ENCODE measurements at regions of chr2 and their contacts with region 1.

Region 1: DNA sequence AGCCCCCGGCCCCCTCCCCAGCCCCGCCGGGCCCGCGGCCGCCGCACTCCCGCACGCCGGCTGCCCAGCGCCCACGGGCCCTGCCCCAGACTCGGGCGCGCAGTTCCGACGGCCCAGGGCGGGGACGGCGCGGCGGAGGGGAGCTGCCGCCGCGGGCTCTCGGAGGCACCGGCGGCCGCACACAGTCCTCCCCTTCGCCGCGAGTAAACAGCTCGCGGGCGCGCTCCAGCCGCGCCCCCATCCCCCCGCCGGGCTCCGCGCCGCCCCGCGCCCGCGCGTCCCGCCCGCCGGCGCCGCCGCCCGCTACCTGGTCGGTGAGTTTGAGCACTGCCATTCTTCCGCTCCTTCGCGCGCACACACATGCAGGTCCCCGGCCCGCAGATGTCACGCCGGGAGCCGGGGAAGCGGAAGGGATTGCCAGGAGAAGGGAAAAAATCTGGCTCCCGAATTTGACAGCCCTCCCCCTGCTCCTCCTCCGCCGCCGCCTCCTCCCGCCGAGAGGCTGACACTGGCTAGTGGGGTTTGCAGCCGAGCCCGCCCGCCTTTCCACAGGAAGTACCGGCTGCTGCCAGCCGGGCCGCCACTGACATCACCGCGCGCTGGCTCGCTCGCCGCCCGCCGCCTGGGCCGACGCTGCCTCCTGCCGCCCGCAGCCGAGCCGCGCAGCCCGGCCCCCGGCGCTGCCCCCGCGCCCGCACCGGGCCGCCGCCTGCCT is at the start of gene ANKRD44:
- DNase-seq: peak; percentile 86 to 94 (median 91)
- ATAC-seq: peak; percentile 88
- H3K4me3 ChIP-seq: peak within 1 kb of the TSS; percentile 90
- H3K4me3 Mint-ChIP-seq: peak within 1 kb of the TSS; percentile 89 to 98 (median 94)
- H3K27ac ChIP-seq: peak within 1 kb of the TSS; percentile 85
- H3K27ac Mint-ChIP-seq: peak within 1 kb of the TSS; percentile 93 to 99 (median 95)
- H3K4me1 ChIP-seq: peaks cover 34 to 43% of the 10 kb centered on the region in 2 donors
- H3K4me1 Mint-ChIP-seq: peaks cover 35 to 74% (median 68%) of the 10 kb centered on the region in 7 donors
- H3K27me3 ChIP-seq: no peaks in the 10 kb centered on the region
- H3K27me3 Mint-ChIP-seq: no peaks in the 10 kb centered on the region
- total RNA-seq, gene ANKRD44: 234 to 296 (median 291) TPM

Region 2: DNA sequence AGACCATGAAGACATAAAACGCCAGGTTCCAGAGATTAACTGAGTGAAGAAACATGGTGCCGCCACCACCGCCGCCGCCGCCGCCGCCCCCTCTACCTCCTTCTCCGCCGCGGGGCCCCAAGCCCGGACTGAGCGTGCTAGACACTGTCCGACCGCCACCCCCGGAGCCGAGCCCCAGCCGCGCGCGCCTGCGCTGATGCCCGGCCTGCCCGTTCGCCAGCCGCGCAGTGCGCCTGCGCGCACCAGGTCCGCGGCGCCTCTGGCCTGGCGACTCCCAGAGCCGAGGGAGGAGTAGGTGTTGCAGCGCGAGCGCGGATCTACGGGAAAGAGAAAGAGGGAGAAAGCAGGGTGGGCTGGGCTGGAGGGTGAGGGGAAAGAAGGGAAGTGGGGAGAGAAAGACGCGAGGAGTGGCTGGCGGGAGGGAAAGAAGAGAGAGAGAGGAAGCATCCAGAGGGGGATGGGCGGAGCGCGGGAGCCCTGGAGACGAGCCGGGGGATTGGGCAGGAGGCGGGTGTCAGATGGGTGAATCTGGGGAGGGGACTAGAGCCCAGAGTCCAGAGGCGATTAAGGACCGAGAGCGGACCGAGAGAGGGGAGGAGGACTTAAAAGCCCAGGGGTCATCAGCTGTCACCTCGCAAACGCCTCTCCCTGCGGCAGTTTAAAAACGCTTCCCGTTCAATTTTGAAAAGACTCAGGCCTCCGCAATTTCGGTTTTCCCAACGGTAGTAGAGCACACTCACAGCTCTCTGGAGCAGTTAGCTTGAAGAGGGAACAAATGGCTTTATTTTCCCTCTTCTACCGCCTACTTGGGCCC is 383.7 kb before region 1 on chr2 and contains the start of gene PGAP1:
- CTCF ChIA-PET with region 1: no interaction called
- POLR2A ChIA-PET with region 1: no interaction called
- intact Hi-C with region 1: loop called in 1 of 2 experiments (anchors 10 kb)
- DNase-seq: peak; percentile 66 to 95 (median 72)
- ATAC-seq: peak; percentile 89
- H3K4me3 ChIP-seq: peak within 1 kb of the TSS; percentile 91
- H3K4me3 Mint-ChIP-seq: peak within 1 kb of the TSS; percentile 85 to 100 (median 96)
- H3K27ac ChIP-seq: peak within 1 kb of the TSS; percentile 79
- H3K27ac Mint-ChIP-seq: peak within 1 kb of the TSS; percentile 90 to 97 (median 94)
- H3K4me1 ChIP-seq: peaks cover 4 to 6% of the 10 kb centered on the region in 2 donors
- H3K4me1 Mint-ChIP-seq: peaks cover 22 to 43% (median 39%) of the 10 kb centered on the region in 7 donors
- H3K27me3 ChIP-seq: no peaks in the 10 kb centered on the region
- H3K27me3 Mint-ChIP-seq: peaks cover 0 to 2% (median 0%) of the 10 kb centered on the region in 5 donors
- total RNA-seq, gene PGAP1: 6.0 to 48.4 (median 6.9) TPM

Region 3: DNA sequence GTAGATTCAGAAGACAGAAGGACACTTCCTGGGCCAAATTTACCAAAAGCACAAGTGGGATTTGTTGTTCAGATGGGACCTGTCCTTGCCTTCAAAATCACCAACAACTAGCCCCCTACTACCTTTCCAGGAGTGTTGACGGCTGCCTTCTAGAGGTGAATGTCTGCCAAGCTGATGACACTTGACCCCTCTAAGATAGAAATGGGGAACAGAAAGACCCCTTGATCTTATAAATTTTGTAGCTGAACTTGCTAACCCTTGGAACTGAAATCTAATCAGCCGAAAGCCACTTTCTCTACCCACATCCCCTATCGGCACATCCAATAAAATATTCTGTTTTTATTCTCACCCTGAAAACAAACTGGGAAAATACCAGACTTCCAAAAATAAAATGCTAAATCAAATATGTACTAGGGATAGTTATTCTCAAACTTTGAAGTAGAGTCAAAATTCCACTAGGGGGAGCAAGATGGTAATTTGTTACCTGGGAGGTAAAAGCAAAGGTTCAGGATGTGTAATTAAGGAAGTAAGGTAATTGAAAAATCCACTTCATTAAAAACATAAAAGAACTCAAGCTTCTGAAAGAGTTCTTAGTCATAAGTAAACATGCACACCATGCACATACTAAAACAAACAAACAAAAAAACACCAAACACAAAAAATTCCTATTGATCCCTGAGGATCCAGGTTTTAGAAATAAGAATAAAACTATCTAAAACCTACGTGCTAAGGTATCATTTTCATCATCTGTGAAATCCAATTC is 119.1 kb before region 1 on chr2:
- CTCF ChIA-PET with region 1: interaction called, 80 read pairs
- POLR2A ChIA-PET with region 1: interaction called, 250 read pairs
- intact Hi-C with region 1: loop called (anchors 1 kb)
- DNase-seq: peak in 7 of 9 donors; percentile 59 to 75 (median 72)
- ATAC-seq: peak; percentile 78
- H3K4me3 ChIP-seq: no peak overlapping the region
- H3K4me3 Mint-ChIP-seq: peak overlapping the region in 9 of 10 donors; percentile 12 to 78 (median 51)
- H3K27ac ChIP-seq: peak overlapping the region; percentile 65
- H3K27ac Mint-ChIP-seq: peak overlapping the region; percentile 74 to 91 (median 79)
- H3K4me1 ChIP-seq: peaks cover 56 to 72% of the 10 kb centered on the region in 2 donors
- H3K4me1 Mint-ChIP-seq: peaks cover 49 to 95% (median 90%) of the 10 kb centered on the region in 7 donors
- H3K27me3 ChIP-seq: no peaks in the 10 kb centered on the region
- H3K27me3 Mint-ChIP-seq: no peaks in the 10 kb centered on the region

Region 4: DNA sequence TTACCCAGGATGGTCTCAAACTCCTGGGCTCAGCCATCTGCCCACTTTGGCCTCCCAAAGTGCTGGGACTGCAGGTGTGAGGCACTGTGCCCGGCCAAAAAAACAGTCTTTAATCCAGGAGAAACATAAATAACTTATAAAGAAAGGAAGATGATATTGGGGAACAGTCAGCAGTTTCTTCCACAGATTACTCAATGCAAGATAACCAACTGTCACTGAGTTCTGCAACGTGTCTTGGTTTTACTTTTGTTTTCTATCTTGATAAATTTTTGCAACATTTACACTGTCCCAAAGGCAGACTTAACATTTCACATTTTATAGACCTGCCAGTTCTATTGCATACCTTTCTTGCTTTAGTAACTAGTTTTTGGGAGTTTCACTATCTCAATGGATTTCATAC is 71.0 kb before region 1 on chr2:
- CTCF ChIA-PET with region 1: interaction called, 6 read pairs
- POLR2A ChIA-PET with region 1: interaction called, 19 read pairs
- intact Hi-C with region 1: loop called (anchors 1 kb)
- DNase-seq: peak in 1 of 9 donors; percentile 30
- ATAC-seq: peak; percentile 48
- H3K4me3 ChIP-seq: peak overlapping the region; percentile 52
- H3K4me3 Mint-ChIP-seq: peak overlapping the region; percentile 72 to 91 (median 83)
- H3K27ac ChIP-seq: peak overlapping the region; percentile 70
- H3K27ac Mint-ChIP-seq: peak overlapping the region; percentile 87 to 98 (median 94)
- H3K4me1 ChIP-seq: peaks cover 86 to 87% of the 10 kb centered on the region in 2 donors
- H3K4me1 Mint-ChIP-seq: peaks cover 62 to 95% (median 89%) of the 10 kb centered on the region in 7 donors
- H3K27me3 ChIP-seq: no peaks in the 10 kb centered on the region
- H3K27me3 Mint-ChIP-seq: no peaks in the 10 kb centered on the region

Region 5: DNA sequence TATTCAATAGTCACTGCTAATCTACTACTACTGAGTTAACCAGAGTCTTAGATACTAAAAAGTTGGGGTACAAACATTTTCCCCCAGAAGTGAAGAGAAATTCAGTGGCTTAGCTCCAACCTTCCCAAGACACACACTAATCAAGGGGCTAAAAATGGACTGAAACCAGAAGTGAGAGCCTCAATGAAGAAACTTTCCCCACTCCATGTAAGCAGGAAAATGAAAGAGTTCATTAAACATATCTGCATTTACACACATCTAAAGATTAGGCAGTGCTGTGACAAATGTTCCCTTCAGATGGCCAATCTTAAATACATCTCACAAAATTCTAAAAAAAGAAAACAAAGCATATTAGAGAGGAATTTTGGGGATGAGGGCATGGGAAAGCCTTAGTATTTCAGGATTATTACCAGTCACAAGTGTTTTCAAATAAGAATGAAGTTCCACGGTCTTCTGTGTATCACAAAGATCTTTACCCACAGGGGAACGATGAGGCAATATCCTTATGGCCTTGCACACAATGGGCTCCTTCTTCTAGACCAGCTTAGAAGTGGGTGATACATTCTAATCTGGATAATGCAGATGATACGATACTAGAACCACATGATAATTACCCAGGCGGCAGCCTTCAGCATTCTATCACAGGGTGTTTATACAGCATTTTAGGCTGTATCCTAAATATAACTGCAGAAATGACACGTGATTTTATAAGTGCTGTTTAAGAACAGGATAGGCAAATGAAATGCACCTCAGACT is 17.0 kb before region 1 on chr2:
- CTCF ChIA-PET with region 1: interaction called, 4 read pairs
- POLR2A ChIA-PET with region 1: interaction called, 158 read pairs
- intact Hi-C with region 1: loop called (anchors 1 kb)
- DNase-seq: peak in 1 of 9 donors; percentile 49
- ATAC-seq: peak; percentile 80
- H3K4me3 ChIP-seq: peak overlapping the region; percentile 23
- H3K4me3 Mint-ChIP-seq: peak overlapping the region; percentile 74 to 97 (median 84)
- H3K27ac ChIP-seq: peak overlapping the region; percentile 69
- H3K27ac Mint-ChIP-seq: peak overlapping the region; percentile 87 to 99 (median 95)
- H3K4me1 ChIP-seq: peaks cover 87 to 93% of the 10 kb centered on the region in 2 donors
- H3K4me1 Mint-ChIP-seq: peaks cover 71 to 96% (median 91%) of the 10 kb centered on the region in 7 donors
- H3K27me3 ChIP-seq: no peaks in the 10 kb centered on the region
- H3K27me3 Mint-ChIP-seq: no peaks in the 10 kb centered on the region

Region 6: GRCh38 chr2:197453161-197453914 is 142.9 kb after region 1 on chr2 and contains the start of gene COQ10B:
- CTCF ChIA-PET with region 1: no interaction called
- POLR2A ChIA-PET with region 1: no interaction called
- intact Hi-C with region 1: loop called in 1 of 2 experiments (anchors 2 kb)
- DNase-seq: peak; percentile 87 to 99 (median 98)
- ATAC-seq: peak; percentile 92
- H3K4me3 ChIP-seq: peak within 1 kb of the TSS; percentile 92
- H3K4me3 Mint-ChIP-seq: peak within 1 kb of the TSS; percentile 92 to 100 (median 99)
- H3K27ac ChIP-seq: peak within 1 kb of the TSS; percentile 96
- H3K27ac Mint-ChIP-seq: peak within 1 kb of the TSS; percentile 97 to 100 (median 100)
- H3K4me1 ChIP-seq: peaks cover 16% of the 10 kb centered on the region in 2 donors
- H3K4me1 Mint-ChIP-seq: peaks cover 25 to 56% (median 47%) of the 10 kb centered on the region in 7 donors
- H3K27me3 ChIP-seq: no peaks in the 10 kb centered on the region
- H3K27me3 Mint-ChIP-seq: peaks cover 0 to 2% (median 0%) of the 10 kb centered on the region in 5 donors
- total RNA-seq, gene COQ10B: 22.9 to 57.2 (median 30.5) TPM

Measured in naive thymus-derived CD4-positive, alpha-beta T cell (primary cell).